ENCODE measurements at regions of chr3 and their contacts with region 1.

Region 1: DNA sequence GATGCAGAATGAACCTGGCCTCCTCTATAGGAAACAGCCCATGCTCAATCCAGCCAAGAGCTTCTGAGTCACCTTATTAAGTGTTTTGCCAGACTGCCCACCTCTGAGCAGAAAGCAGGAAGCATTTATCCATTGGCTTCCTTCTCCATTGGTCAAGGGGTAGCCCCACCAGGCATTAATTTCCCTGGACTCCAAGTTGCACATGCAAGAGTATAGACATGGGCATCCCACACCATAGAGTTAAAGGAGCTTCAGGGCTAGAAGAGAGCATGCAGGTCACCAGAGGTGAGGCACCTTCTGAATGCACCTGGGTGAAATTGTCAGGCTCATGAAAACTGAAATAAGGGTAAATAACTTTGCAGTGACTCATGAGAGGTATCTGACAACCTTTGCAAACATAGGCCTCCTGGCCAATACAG is 230.8 kb upstream of the STAC start:
- DNase-seq: peak; percentile 46 to 80
- H3K4me3 ChIP-seq: no peak overlapping the region
- H3K27ac ChIP-seq: peak overlapping the region; percentile 41
- H3K4me1 ChIP-seq: peaks cover 21% of the 10 kb centered on the region
- H3K27me3 ChIP-seq: no peaks in the 10 kb centered on the region
- CTCF ChIP-seq: no peak

Region 2: DNA sequence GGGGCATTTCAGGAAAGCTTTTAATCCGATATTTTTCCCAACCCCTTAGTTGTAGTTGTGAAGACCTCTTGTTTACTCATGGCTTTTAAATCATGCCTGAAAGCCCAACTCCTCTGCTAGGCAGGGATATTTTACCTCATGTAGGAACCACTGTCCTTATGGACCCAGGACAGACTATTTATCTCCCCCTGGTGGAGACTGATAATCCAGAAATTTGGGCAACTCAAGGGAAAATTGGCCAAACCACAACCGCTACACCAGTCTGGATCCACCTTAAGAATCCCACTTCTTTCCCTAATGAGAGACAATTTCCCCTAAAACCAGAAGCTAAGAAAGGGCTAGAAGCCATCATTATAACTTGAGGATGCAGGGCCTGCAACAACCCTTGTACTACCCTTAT is 17.2 kb before region 1 on chr3:
- CTCF ChIA-PET with region 1: interaction called, 12 read pairs
- POLR2A ChIA-PET with region 1: no interaction called
- intact Hi-C with region 1: no loop called
- DNase-seq: no peak
- H3K4me3 ChIP-seq: no peak overlapping the region
- H3K27ac ChIP-seq: no peak overlapping the region
- H3K4me1 ChIP-seq: no peaks in the 10 kb centered on the region
- H3K27me3 ChIP-seq: no peaks in the 10 kb centered on the region
- CTCF ChIP-seq: no peak; the same call in 1 of the 2 replicates